Sigmoid colon (tissue), 7 donors: ENCODE measurements at regions of chr2 and their contacts with region 1.

Region 1: DNA sequence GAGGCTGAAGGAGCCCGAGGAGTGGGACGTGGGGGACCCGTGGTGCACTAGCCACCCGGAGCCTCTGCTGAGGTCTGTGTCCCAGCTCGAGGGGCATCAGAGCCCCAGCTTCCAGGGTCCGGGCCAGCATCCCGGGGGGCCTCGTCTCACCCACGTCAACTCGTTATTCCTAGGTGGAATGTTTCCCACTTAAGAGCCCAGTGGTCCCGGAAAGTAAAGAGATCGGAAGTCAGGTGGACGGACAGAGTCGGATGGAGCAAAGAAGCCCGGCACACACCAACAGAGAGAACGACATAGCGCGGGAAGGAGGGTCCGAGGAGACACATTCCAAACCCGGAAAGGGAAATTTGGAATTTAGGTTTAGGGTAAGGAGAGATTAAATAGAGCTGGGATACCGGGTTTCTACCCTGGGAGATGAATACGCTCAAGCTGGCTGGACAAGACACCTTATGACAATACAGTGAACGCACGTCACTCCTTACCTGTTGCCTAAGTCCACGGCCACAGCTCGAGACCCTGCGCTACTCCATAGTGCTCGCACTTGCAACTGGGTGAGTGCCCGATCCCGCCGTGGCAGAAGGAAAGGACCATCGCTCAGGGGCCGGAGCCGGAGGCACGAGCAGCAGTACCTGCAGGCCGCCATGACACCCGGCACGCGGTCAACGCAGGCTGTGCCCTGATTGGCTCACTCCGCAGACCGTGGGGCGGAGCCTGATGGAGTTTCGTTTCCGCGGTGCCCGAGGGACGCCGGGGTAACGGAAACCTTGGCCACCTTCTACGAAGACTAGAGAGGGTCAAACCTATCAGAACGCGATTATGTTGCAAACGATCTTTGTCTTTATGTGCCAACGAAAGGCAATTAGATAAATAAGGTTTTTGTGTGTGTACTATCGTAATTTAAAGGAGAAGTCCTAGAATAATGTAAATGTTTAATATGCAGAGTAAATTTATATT is at the start of gene PNPT1:
- DNase-seq: peak; percentile 95
- H3K4me3 ChIP-seq: peak within 1 kb of the TSS; percentile 66 to 96 (median 72)
- H3K27ac ChIP-seq: peak within 1 kb of the TSS; percentile 59 to 79 (median 66)
- H3K4me1 ChIP-seq: peaks cover 0 to 15% (median 6%) of the 10 kb centered on the region in 4 donors
- H3K27me3 ChIP-seq: no peaks in the 10 kb centered on the region
- CTCF ChIP-seq: no peak
- EP300 ChIP-seq: no peak
- POLR2A ChIP-seq: no peak
- total RNA-seq, gene PNPT1: 11.5 to 17.5 (median 13.8) TPM

Region 2: DNA sequence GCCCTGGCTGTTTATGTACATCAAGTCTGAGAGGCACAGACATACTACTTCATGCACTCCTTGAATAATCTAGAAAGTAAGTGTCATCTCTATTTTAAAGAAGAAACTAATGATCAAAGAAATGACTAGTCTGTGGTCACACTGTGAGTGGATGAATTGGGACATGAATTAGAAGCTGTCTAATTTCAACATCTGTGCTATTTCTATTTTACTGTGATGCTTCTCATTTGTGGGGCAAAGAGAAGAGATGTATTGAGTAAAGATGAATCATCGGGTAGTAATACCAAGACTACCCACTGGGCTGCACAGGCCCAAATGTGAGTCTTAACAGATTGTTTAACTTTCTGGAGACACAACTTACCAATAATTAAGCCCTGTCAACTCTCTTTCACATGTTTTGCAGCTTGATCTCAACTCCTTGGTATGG is 382.0 kb before region 1 on chr2:
- intact Hi-C with region 1: no loop called
- DNase-seq: no peak
- H3K4me3 ChIP-seq: no peak overlapping the region
- H3K27ac ChIP-seq: no peak overlapping the region
- H3K4me1 ChIP-seq: no peaks in the 10 kb centered on the region
- H3K27me3 ChIP-seq: no peaks in the 10 kb centered on the region
- CTCF ChIP-seq: no peak
- EP300 ChIP-seq: no peak
- POLR2A ChIP-seq: no peak

Region 3: DNA sequence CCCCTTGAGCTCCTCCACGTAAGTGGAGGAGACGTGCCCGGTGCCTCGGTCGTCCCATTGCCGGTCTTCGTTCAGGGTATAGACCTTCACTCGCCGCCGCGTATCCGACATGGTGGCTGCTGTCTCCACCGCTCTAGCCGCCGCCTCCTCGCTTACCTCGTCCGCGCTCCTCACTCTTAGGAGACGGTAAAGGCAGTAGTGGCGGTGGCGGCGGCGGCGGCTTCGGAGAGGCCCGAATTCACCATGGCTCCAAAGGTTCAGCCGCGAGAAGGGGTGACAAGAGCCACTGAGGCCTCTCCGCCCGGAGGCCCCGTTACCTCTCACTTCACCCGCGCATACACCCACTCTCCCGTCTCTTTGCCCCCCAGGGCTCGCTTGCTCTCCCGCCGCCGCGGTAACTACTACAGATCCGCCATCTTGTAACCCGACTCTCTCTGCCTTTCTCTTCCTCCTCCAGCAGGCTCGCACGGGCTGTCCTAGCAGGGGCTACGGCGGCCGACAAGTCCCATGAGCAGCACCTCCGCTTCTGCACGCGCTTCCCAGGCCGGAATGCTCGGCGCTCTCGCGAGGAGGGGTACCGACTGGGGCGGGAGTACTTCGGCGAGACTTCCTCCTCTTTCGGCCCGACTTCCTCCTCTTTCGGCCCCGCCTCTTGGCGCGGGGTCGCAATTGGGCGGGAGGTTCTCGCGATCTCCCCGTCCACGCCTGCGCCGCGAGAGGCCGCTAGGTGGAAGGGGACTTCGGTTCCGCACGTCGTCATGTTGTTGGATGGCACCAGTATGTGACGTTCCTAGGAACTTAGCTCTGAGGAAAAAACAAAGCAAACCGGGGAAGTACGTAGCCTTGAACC is 76.1 kb before region 1 on chr2 and contains the start of gene PPP4R3B:
- intact Hi-C with region 1: loop called (anchors 5 kb)
- DNase-seq: peak; percentile 100
- H3K4me3 ChIP-seq: peak within 1 kb of the TSS; percentile 93 to 99 (median 97)
- H3K27ac ChIP-seq: peak within 1 kb of the TSS; percentile 95 to 99 (median 98)
- H3K4me1 ChIP-seq: peaks cover 0 to 48% (median 39%) of the 10 kb centered on the region in 4 donors
- H3K27me3 ChIP-seq: no peaks in the 10 kb centered on the region
- CTCF ChIP-seq: peak; percentile 42 to 74 (median 72)
- EP300 ChIP-seq: peak in 1 of 4 donors; percentile 59
- POLR2A ChIP-seq: peak; percentile 93 to 94
- total RNA-seq, gene PPP4R3B: 75.8 to 88.5 (median 78.8) TPM

Region 4: GRCh38 chr2:55732854-55733253 is 39.4 kb after region 1 on chr2:
- intact Hi-C with region 1: no loop called
- DNase-seq: no peak
- H3K4me3 ChIP-seq: no peak overlapping the region
- H3K27ac ChIP-seq: peak overlapping the region in 3 of 4 donors; percentile 7 to 45 (median 27)
- H3K4me1 ChIP-seq: no peaks in the 10 kb centered on the region
- H3K27me3 ChIP-seq: no peaks in the 10 kb centered on the region
- CTCF ChIP-seq: no peak
- EP300 ChIP-seq: no peak
- POLR2A ChIP-seq: no peak

Region 5: DNA sequence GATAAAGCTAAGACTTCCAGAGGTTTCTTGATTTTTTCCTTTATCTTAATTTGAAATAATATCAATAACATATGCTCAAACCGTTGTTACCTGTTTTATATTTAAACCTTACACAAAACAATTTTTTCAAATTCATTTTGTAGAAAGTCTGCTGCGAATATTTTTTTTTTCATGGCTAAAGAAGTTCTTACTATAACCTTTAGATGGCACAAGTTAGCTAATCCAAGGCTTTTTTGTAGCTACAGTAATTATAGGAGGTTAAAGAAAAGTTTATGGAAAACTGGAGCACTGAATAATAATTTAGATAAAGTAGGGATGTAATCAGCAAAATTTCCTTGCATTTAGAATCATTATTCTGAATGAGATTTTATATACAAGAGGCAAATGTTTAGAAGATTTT is 78.2 kb after region 1 on chr2:
- intact Hi-C with region 1: no loop called
- DNase-seq: no peak
- H3K4me3 ChIP-seq: no peak overlapping the region
- H3K27ac ChIP-seq: no peak overlapping the region
- H3K4me1 ChIP-seq: no peaks in the 10 kb centered on the region
- H3K27me3 ChIP-seq: no peaks in the 10 kb centered on the region
- CTCF ChIP-seq: peak in 2 of 4 experiments; percentile 5 to 45
- EP300 ChIP-seq: no peak
- POLR2A ChIP-seq: no peak